ENCODE measurements at regions of chr6 and their contacts with region 1.

Region 1: DNA sequence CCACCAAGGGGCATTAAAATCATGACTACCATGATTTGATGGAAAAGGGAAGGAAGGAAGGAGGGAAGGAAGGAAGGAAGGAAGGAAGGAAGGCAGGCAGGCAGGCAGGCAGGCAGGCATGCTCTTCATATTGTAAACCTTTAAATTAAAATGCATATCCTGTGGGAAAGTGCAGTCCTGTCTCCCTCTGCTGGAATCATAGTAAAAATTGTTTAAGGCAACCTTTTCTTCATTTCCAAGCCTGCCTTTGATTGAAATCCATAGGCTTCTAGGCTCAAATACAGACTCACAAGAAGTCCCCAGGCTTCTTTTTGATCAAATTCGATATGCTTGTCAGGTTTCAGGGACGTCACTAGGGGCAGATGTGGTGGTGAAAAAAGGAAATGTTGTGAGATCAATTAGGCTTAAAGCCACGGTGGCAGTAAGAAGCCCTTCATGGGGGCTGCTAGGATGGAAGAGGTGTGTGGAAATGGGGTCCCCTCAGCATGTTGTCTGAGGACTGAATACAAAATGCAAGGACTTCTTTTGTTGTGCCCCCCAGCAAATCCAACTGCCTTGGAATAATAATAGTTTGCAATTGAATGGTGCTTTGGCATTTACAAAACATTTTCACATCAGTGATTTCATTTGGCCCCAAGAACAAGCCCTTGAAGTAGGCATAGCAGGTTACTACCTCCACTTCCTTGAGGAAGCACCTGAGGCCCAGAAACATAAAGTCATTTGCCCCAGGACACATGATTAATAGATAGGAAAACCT is 25.6 kb upstream of the GABRR1 start:
- DNase-seq: no peak
- ATAC-seq: no peak
- H3K4me3 ChIP-seq: no peak overlapping the region
- H3K27ac ChIP-seq: no peak overlapping the region
- H3K4me1 ChIP-seq: no peaks in the 10 kb centered on the region
- H3K27me3 ChIP-seq: no peaks in the 10 kb centered on the region
- CTCF ChIP-seq: peak; percentile 47

Region 2: GRCh38 chr6:88881451-88881850 is 361.3 kb before region 1 on chr6:
- intact Hi-C with region 1: no loop called
- DNase-seq: no peak
- ATAC-seq: no peak
- H3K4me3 ChIP-seq: no peak overlapping the region
- H3K27ac ChIP-seq: no peak overlapping the region
- H3K4me1 ChIP-seq: no peaks in the 10 kb centered on the region
- H3K27me3 ChIP-seq: no peaks in the 10 kb centered on the region
- CTCF ChIP-seq: no peak

Region 3: DNA sequence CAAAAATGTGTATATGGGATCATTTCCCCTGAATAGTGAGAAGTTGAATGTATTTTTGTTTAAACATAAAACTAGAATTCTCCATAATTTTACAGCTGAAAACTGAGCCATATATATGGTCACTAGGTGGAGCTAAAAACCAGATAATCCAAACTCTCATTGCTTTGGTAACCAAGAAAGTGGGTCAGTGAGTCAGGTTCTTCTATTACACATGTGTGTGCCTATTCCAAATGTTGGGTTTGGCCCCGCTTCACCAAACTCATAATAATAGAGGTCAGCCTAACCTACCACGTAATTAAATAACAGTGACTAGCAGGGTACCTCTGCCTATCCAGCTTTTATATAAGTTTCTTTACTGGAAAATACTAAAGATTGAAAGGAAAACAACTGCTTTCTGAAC is 260.0 kb before region 1 on chr6:
- intact Hi-C with region 1: loop called (anchors 10 kb)
- DNase-seq: no peak
- ATAC-seq: peak; percentile 93 to 95
- H3K4me3 ChIP-seq: no peak overlapping the region
- H3K27ac ChIP-seq: no peak overlapping the region
- H3K4me1 ChIP-seq: peaks cover 6% of the 10 kb centered on the region
- H3K27me3 ChIP-seq: no peaks in the 10 kb centered on the region
- CTCF ChIP-seq: peak; percentile 70

Region 4: GRCh38 chr6:89311853-89312531 is 69.2 kb after region 1 on chr6:
- intact Hi-C with region 1: no loop called
- DNase-seq: peak; percentile 78
- ATAC-seq: peak; percentile 65 to 72
- H3K4me3 ChIP-seq: peak overlapping the region; percentile 11
- H3K27ac ChIP-seq: peak overlapping the region; percentile 62
- H3K4me1 ChIP-seq: peaks cover 25% of the 10 kb centered on the region
- H3K27me3 ChIP-seq: no peaks in the 10 kb centered on the region
- CTCF ChIP-seq: peak; percentile 48